WTC11 (cell line): ENCODE measurements at regions of chr1 and their contacts with region 1.

Region 1: GRCh38 chr1:53992085-53992874 is 25.7 kb downstream of the LDLRAD1 start:
- DNase-seq: peak; percentile 63
- ATAC-seq: peak; percentile 98
- H3K4me3 Mint-ChIP-seq: no peak overlapping the region
- H3K27ac Mint-ChIP-seq: no peak overlapping the region
- H3K4me1 Mint-ChIP-seq: no peaks in the 10 kb centered on the region
- H3K27me3 Mint-ChIP-seq: 0 out of 2 replicates have a peak, but pooled peaks cover under 1% of the 10 kb centered on the region
- CTCF ChIP-seq: peak; percentile 42

Region 2: DNA sequence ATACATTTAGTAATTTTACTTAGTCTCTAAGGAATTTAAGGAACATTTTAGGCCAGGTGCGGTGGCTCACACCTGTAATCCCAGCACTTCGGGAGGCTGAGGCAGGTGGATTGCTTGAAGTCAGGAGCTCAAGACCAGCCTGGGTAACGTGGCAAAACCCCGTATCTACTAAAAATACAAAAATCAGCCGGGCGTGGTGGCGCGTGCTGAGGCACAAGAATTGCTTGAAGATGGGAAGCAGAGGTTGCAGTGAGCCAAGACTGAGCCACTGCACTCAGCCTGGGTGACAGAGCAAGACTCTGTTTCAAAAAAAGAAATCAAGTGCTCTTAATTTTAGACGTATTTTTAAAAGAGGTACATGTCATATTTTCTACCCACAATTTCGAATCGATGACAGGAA is 157.5 kb before region 1 on chr1:
- CTCF ChIA-PET with region 1: no interaction called
- POLR2A ChIA-PET with region 1: no interaction called
- DNase-seq: no peak
- ATAC-seq: no peak
- H3K4me3 Mint-ChIP-seq: no peak overlapping the region
- H3K27ac Mint-ChIP-seq: no peak overlapping the region
- H3K4me1 Mint-ChIP-seq: peaks cover 10% of the 10 kb centered on the region
- H3K27me3 Mint-ChIP-seq: no peaks in the 10 kb centered on the region; the same call in 1 of the 2 replicates
- CTCF ChIP-seq: no peak

Region 3: DNA sequence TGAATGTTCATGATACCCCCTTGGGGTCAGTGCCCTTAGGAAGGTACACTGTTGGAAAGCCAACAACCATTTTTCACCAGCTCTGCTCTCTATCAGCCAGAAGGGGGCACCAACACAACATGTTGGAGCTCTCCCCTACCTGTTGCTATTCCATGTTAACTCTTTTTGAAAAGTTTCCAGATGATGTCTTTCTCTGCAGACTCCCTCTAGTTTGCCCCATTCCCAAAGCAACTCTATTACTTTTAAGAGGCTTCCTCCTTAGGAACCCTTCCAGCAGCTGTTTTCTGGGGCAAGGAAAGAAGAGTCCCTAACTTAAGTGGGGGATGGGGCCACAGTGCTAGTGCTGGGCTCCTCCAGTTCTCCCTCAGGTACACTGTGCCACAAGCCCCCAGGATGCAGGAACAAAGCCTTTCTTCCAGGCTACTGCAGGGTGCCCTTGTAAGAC is 131.3 kb before region 1 on chr1:
- CTCF ChIA-PET with region 1: interaction called, 16 read pairs
- POLR2A ChIA-PET with region 1: no interaction called
- DNase-seq: peak; percentile 44
- ATAC-seq: peak; percentile 97
- H3K4me3 Mint-ChIP-seq: no peak overlapping the region
- H3K27ac Mint-ChIP-seq: peak overlapping the region; percentile 46
- H3K4me1 Mint-ChIP-seq: peaks cover 5% of the 10 kb centered on the region
- H3K27me3 Mint-ChIP-seq: no peaks in the 10 kb centered on the region
- CTCF ChIP-seq: peak; percentile 57

Region 4: DNA sequence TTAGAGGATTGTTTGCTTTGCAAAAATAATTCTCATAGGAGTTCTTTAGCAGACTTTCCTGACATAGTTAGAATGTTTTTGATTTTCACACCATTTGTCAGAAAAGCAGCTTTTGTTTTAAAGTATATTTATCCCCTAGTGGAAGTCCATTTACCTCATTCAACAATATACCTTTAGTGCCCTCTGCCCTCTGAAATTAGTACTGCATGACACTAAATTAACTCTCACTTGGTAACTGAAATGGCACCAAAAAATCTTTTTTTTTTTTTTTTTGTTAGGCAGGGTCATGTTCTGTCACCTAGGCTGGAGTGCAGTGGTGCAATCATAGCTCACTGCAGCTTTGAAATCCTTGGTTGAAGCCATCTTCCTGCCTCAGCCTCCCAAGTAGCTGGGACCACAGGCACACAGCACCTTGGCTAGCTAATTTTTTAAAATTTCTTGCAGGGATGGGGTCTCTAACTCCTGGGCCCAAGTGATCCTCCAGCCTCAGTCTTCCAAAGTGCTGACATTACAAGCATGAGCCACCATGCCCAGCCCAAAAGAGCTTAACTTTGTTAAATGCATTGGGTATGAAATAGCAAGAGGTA is 32.5 kb before region 1 on chr1:
- CTCF ChIA-PET with region 1: interaction called, 20 read pairs
- POLR2A ChIA-PET with region 1: no interaction called
- DNase-seq: no peak
- ATAC-seq: no peak
- H3K4me3 Mint-ChIP-seq: no peak overlapping the region
- H3K27ac Mint-ChIP-seq: no peak overlapping the region
- H3K4me1 Mint-ChIP-seq: peaks cover 24% of the 10 kb centered on the region
- H3K27me3 Mint-ChIP-seq: no peaks in the 10 kb centered on the region
- CTCF ChIP-seq: peak; percentile 38; the same call in 1 of the 2 replicates

Region 5: GRCh38 chr1:54008876-54009275 is 16.6 kb after region 1 on chr1:
- CTCF ChIA-PET with region 1: interaction called, 26 read pairs
- POLR2A ChIA-PET with region 1: no interaction called
- DNase-seq: no peak
- ATAC-seq: no peak
- H3K4me3 Mint-ChIP-seq: no peak overlapping the region
- H3K27ac Mint-ChIP-seq: no peak overlapping the region
- H3K4me1 Mint-ChIP-seq: peaks cover 4% of the 10 kb centered on the region
- H3K27me3 Mint-ChIP-seq: peaks cover 9% of the 10 kb centered on the region
- CTCF ChIP-seq: no peak

Region 6: DNA sequence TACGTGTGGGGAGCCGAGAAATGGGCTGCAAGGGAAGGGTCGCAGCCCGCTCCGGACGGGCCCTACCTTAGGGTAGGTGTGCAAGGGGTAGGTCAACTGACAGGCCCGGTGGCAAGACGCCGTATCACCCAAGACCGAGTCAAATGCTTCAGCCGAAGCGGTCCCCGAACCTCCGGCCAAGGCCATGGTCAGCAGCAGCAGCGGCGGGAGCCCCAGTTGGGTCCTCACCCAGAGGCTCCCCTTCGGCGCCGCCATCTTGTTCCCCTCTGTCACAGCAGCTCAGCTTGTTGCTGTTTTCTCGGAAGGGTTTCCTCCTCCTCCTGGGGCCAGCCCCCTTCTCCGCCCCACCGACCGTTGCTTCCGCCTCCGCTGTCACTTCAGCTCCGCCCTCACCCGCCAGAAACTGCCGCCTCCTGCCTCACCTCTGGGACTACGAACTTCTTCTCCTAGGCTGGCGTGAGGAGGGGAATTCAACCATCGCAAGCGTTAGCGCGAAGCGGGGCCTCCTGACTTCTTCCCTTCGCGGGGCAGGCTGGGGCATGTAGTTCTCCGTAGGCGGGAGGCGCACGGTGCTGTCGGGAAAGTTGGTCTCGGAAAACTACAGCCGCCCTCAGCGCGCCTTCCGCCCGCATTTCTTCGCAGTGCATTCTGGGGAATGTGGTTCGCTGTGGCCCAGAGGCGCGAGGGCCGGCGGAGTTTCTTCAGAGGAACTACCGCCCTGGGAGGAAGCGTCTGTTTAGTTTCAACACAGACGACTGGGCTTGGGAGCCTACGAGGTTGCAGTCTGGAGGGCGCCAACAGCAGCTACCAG is 60.9 kb after region 1 on chr1 and contains the starts of genes TCEANC2 and TMEM59:
- CTCF ChIA-PET with region 1: interaction called, 18 read pairs
- POLR2A ChIA-PET with region 1: no interaction called
- DNase-seq: peak; percentile 97
- ATAC-seq: peak; percentile 96
- H3K4me3 Mint-ChIP-seq: no peak within 1 kb of the TSS
- H3K27ac Mint-ChIP-seq: no peak within 1 kb of the TSS; the same call in 1 of the 2 replicates
- H3K4me1 Mint-ChIP-seq: peaks cover 8% of the 10 kb centered on the region; the same call in 1 of the 2 replicates
- H3K27me3 Mint-ChIP-seq: no peaks in the 10 kb centered on the region
- CTCF ChIP-seq: no peak
- total RNA-seq, gene TCEANC2: 4.7 to 6.9 TPM (median 6.3 TPM) in 3 replicates
- total RNA-seq, gene TMEM59: 122 to 133 TPM (median 128 TPM) in 3 replicates